ENCODE measurements at regions of chr2 and their contacts with region 1.

Region 1: DNA sequence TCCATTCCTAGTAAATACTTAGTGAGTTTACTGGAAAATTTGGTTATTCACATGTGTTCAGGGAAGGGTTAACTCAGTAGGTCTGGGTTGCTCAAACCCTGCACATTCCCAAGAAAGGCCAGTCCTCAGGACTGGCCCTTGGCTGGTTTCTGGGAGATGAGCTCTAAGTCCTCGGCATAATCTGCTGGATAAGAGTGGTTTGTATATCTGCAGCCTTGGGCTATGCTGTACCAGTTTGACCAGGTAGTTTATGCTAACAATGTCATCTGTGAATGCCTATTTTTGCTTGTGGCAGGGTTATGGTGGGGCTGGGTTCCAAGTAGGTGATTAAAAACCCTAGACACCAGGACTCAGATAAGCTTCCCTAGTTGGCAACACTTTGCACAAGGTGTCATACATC is 7.4 kb upstream of the PTH2R start:
- DNase-seq: no peak
- ATAC-seq: no peak
- H3K4me3 Mint-ChIP-seq: no peak overlapping the region
- H3K27ac Mint-ChIP-seq: no peak overlapping the region
- H3K4me1 Mint-ChIP-seq: no peaks in the 10 kb centered on the region
- H3K27me3 Mint-ChIP-seq: peaks cover 27% of the 10 kb centered on the region
- CTCF ChIP-seq: no peak

Region 2: DNA sequence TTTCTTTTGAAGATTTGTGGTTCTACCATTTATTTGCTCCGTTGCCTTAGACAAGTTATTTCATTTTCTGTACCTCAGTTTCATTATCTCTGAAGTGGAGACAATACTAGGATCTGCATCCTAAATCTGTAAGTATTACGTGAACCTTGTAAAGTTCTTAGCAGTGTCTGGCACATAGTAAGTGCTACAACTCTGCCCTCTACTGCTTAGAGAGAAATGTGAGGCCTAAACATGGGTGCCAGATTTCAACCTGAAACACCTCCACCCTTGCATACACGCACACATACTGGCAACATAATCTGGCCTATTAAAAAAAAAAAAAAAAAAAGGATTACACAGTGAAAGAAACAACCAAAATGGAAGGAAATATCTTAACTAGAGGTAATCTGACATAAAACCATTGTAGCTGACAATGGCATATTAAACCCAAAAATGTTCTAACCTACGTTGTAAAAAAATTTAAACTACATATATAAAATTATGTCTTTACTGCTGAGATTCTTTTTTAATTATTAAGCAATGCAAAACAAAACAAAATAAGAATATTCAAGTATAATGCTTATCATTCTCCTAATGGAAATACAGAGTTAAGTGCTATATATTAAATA is 1157.3 kb after region 1 on chr2:
- CTCF ChIA-PET with region 1: no interaction called
- POLR2A ChIA-PET with region 1: no interaction called
- intact Hi-C with region 1: loop called (anchors 5 kb)
- DNase-seq: no peak
- ATAC-seq: peak; percentile 61
- H3K4me3 Mint-ChIP-seq: no peak overlapping the region
- H3K27ac Mint-ChIP-seq: no peak overlapping the region
- H3K4me1 Mint-ChIP-seq: no peaks in the 10 kb centered on the region
- H3K27me3 Mint-ChIP-seq: no peaks in the 10 kb centered on the region
- CTCF ChIP-seq: no peak

Measured in activated B cell treated with CpG ODN at 0.5 μM for 24 hours (primary cell).